Heart right ventricle (tissue), 16 donors: ENCODE measurements at regions of chr11 and their contacts with region 1.

Region 1: GRCh38 chr11:19633276-19633675 is 79.4 kb upstream of the NAV2 start:
- DNase-seq: peak in 1 of 2 donors; percentile 38
- ATAC-seq: peak; percentile 32 to 86 (median 66)
- H3K4me3 ChIP-seq: no peak overlapping the region
- H3K27ac ChIP-seq: peak overlapping the region in 1 of 10 donors; percentile 4
- H3K4me1 ChIP-seq: peaks cover 0 to 32% (median 17%) of the 10 kb centered on the region in 9 donors
- H3K27me3 ChIP-seq: no peaks in the 10 kb centered on the region
- CTCF ChIP-seq: no peak

Region 2: GRCh38 chr11:19673924-19674729 is 40.9 kb after region 1 on chr11:
- intact Hi-C with region 1: loop called in 1 of 10 experiments (anchors 5 kb)
- DNase-seq: peak; percentile 78 to 81
- ATAC-seq: peak; percentile 74 to 90 (median 87)
- H3K4me3 ChIP-seq: no peak overlapping the region
- H3K27ac ChIP-seq: peak overlapping the region; percentile 60 to 93 (median 81)
- H3K4me1 ChIP-seq: peaks cover 11 to 70% (median 47%) of the 10 kb centered on the region in 9 donors
- H3K27me3 ChIP-seq: no peaks in the 10 kb centered on the region
- CTCF ChIP-seq: no peak

Region 3: GRCh38 chr11:19691815-19692500 is 58.7 kb after region 1 on chr11:
- intact Hi-C with region 1: no loop called
- DNase-seq: no peak
- ATAC-seq: no peak
- H3K4me3 ChIP-seq: no peak overlapping the region
- H3K27ac ChIP-seq: no peak overlapping the region
- H3K4me1 ChIP-seq: peaks cover 0 to 64% (median 25%) of the 10 kb centered on the region in 9 donors
- H3K27me3 ChIP-seq: no peaks in the 10 kb centered on the region
- CTCF ChIP-seq: no peak